Posterior vena cava (tissue), 2 donors: ENCODE measurements at regions of chr11 and their contacts with region 1.

Region 1: DNA sequence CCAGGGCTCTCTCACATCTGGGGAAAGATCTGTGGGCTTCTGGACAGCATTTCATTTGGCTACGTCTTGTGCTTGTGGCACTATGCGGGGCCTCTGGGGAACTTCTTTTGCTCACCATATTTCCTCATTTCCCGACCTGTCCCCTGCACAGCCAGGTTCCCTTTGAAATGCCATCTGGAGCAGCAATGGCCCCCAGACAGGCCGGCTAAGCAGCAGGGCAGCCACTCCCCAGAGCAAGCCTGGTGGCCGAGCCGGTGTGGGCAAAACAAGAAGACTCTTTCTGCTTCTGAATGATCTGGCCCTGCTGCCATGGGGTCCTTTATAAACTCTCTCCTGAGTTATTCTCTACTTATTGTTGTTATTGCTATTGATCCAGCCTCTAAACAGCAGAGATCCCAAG is 190.7 kb upstream of the NECTIN1 start:
- DNase-seq: peak; percentile 42

Region 2: GRCh38 chr11:119895981-119896380 is 23.7 kb before region 1 on chr11:
- intact Hi-C with region 1: loop called in 1 of 2 experiments (anchors 1 kb)
- DNase-seq: no peak

Region 3: GRCh38 chr11:119952441-119952840 is 32.8 kb after region 1 on chr11:
- intact Hi-C with region 1: loop called in 1 of 2 experiments (anchors 1 kb)
- DNase-seq: no peak

Region 4: GRCh38 chr11:119982517-119983239 is 63.0 kb after region 1 on chr11:
- intact Hi-C with region 1: no loop called
- DNase-seq: no peak